ENCODE measurements at regions of chr2 and their contacts with region 1.

Region 1: DNA sequence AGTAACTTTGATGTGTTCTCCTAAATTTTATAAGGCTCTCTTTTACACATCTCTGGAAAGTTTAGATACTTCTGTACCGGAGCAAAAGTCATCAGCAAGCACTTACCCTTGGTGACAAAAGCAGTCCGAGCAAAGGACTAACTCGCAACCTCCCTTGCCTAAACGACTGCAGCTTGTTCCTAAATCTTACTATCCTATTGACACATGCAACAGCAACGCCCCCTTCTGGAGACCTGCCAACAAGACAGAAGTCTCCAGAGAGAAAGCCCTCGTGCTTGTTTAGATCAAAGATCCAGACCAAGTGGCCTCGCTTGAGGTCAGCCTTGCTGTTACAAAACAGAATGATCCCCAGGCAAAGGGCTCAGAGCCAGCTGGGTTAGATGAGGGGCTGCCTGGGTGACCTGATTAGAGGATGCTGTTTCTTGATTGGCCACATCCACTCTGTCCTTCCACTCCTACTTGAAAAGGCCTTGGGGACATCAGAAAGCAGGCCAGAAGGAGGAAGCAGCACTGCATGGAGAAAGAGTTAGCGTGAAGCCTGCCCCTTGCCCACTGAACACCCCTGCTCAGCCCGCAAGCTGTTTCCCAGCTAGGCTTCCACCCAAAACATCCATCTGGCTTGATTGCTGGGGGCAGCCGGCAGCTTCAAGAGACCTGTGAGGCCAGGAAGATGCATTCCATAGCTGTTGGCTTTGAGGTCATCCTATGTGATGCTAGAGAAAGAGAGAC is 94.3 kb downstream of the HNRNPLL start:
- DNase-seq: peak; percentile 84
- H3K4me3 Mint-ChIP-seq: no peak overlapping the region
- H3K27ac Mint-ChIP-seq: no peak overlapping the region
- H3K4me1 Mint-ChIP-seq: peaks cover 16% of the 10 kb centered on the region
- H3K27me3 Mint-ChIP-seq: peaks cover 4% of the 10 kb centered on the region

Region 2: DNA sequence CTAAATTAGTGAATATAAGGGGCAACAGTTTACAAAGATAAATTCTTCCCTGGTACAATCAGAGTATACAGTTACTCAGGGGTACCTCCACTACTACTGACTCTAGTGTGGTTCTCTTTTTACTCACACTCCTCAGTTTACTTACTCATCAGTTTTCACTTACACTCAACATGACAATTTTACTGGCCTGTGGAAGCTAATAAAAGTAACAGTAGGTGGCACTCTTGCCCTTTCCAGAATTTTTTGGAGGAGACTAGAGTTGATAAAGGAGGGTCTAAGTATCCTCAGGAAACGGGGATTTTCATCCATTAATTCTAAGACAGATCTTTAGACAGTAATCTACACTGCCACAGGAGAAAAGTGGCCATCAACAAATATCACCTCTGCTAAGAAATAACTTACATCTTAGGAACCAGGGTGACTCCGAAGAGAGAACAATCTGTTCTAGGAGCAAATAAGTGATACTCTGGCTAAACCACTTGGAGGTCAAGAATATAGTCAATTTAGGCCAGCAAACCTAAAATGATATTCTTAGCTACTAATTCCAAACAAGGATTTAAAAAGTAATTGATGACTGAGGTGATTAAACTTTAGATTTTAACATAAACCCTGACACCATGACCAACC is 192.7 kb before region 1 on chr2:
- CTCF ChIA-PET with region 1: interaction called, 146 read pairs
- POLR2A ChIA-PET with region 1: interaction called, 28 read pairs
- DNase-seq: no peak
- H3K4me3 Mint-ChIP-seq: no peak overlapping the region
- H3K27ac Mint-ChIP-seq: no peak overlapping the region
- H3K4me1 Mint-ChIP-seq: peaks cover 6% of the 10 kb centered on the region
- H3K27me3 Mint-ChIP-seq: no peaks in the 10 kb centered on the region

Region 3: DNA sequence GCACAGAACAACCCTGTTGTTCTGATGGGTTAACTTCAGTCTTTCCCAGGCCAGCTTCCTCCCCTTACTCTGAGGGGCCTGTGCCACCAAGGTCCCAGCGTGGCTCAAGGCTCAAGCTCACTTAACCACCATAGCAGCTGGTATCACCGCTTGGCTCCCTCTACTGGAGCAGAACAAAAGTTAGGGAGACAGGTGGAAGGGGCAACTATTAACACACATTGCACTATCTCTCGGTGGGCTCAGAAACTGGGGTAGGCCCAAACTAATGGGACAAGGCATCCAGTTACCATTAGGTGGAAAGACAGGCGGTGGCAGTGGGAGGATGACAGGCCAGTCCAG is 42.7 kb before region 1 on chr2:
- CTCF ChIA-PET with region 1: interaction called, 13 read pairs
- POLR2A ChIA-PET with region 1: no interaction called
- DNase-seq: no peak
- H3K4me3 Mint-ChIP-seq: no peak overlapping the region
- H3K27ac Mint-ChIP-seq: no peak overlapping the region
- H3K4me1 Mint-ChIP-seq: peaks cover 7% of the 10 kb centered on the region
- H3K27me3 Mint-ChIP-seq: peaks cover 3% of the 10 kb centered on the region

Region 4: DNA sequence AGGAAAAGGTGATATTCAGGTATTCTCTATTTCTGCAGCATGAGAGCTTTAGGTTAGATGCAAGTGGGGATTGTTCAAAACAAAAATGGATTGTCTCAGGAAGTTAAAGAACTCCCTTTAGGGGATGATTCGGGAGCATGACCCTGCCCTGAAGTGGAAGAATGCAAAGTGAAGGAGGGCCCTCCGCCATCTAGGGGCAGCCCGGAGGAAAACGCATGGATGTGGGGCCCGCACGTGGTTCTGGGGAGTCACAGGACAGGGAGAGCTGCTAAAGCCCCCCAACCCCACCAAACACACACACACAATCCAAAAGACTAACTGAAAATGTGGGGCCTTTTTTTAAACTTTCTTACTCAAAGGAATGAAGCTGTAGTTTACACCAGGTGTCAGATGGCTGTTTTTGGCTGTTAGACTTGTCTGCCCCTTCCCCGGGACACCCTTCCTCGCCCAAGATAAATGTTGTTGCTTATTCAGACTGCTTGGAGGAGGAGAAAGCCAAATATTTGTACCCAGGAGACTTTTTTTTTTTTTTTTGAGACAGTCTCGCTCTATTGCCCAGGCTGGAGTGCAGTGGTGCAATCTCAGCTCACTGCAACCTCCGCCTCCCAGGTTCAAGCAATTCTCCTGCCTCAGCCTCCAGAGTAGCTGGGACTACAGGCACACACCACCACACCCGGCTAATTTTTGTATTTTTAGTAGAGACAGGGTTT is 15.4 kb after region 1 on chr2:
- CTCF ChIA-PET with region 1: interaction called, 12 read pairs
- POLR2A ChIA-PET with region 1: no interaction called
- DNase-seq: no peak
- H3K4me3 Mint-ChIP-seq: no peak overlapping the region
- H3K27ac Mint-ChIP-seq: no peak overlapping the region
- H3K4me1 Mint-ChIP-seq: peaks cover 12% of the 10 kb centered on the region
- H3K27me3 Mint-ChIP-seq: peaks cover 26% of the 10 kb centered on the region

Region 5: GRCh38 chr2:38806015-38806732 is 297.7 kb after region 1 on chr2:
- CTCF ChIA-PET with region 1: no interaction called
- POLR2A ChIA-PET with region 1: no interaction called
- DNase-seq: peak; percentile 18
- H3K4me3 Mint-ChIP-seq: no peak overlapping the region
- H3K27ac Mint-ChIP-seq: no peak overlapping the region
- H3K4me1 Mint-ChIP-seq: no peaks in the 10 kb centered on the region
- H3K27me3 Mint-ChIP-seq: no peaks in the 10 kb centered on the region